Sigmoid colon (tissue), 7 donors: ENCODE measurements at regions of chr1 and their contacts with region 1.

Region 1: GRCh38 chr1:65067491-65068201 is 80.4 kb upstream of the AK4 start:
- DNase-seq: peak; percentile 89
- H3K4me3 ChIP-seq: peak overlapping the region; percentile 91 to 95 (median 94)
- H3K27ac ChIP-seq: peak overlapping the region; percentile 99 to 100 (median 100)
- H3K4me1 ChIP-seq: peaks cover 0 to 39% (median 34%) of the 10 kb centered on the region in 4 donors
- H3K27me3 ChIP-seq: no peaks in the 10 kb centered on the region
- CTCF ChIP-seq: no peak
- EP300 ChIP-seq: no peak
- POLR2A ChIP-seq: peak; percentile 74 to 79

Region 2: DNA sequence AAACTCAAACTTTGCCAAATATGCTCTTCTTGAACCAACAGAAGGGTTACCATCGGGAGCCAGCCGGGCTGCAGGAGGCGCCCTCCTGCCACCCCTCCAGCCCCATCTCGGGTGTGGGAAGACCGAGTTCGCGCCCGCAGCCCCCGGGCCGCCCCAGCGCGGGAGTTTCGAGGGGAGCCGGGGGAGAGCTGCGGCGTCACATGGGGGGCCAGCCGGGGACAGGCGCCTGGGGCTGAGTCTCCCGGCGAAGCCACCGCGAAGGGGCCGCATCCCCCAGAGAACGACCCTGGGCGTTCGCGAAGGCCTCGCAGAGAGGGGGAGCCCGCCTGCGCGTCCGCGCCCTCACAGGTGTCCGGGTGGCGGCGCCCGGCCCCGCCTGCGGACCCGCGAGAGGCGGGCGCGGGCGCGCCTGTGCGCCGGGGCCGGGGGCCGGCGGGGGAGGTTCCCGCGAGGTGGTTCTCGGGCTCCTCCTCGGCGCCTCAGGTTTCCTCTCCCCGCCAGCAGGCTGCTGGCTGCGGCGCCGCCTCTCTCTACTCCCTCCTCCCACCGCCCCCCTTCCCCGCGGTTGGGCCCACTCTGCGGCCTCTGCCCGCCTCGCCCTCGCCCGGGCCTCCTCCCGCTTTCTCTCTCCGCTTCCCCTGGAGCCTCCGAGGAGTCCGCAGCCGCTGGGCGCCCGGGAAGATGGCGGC is 323.0 kb before region 1 on chr1 and contains the start of gene RAVER2:
- intact Hi-C with region 1: loop called (anchors 5 kb)
- DNase-seq: peak; percentile 87
- H3K4me3 ChIP-seq: peak within 1 kb of the TSS; percentile 74 to 91 (median 82)
- H3K27ac ChIP-seq: peak within 1 kb of the TSS; percentile 83 to 91 (median 90)
- H3K4me1 ChIP-seq: peaks cover 0 to 34% (median 24%) of the 10 kb centered on the region in 4 donors
- H3K27me3 ChIP-seq: no peaks in the 10 kb centered on the region
- CTCF ChIP-seq: peak in 2 of 4 experiments; percentile 20 to 46
- EP300 ChIP-seq: no peak
- POLR2A ChIP-seq: no peak
- total RNA-seq, gene RAVER2: 12.7 to 22.2 (median 17.4) TPM

Region 3: GRCh38 chr1:64898107-64898845 is 169.4 kb before region 1 on chr1:
- intact Hi-C with region 1: loop called (anchors 10 kb)
- DNase-seq: peak; percentile 95
- H3K4me3 ChIP-seq: no peak overlapping the region
- H3K27ac ChIP-seq: peak overlapping the region; percentile 59 to 83 (median 81)
- H3K4me1 ChIP-seq: peaks cover 0 to 36% (median 28%) of the 10 kb centered on the region in 4 donors
- H3K27me3 ChIP-seq: no peaks in the 10 kb centered on the region
- CTCF ChIP-seq: no peak
- EP300 ChIP-seq: peak in 2 of 4 donors; percentile 40 to 66
- POLR2A ChIP-seq: no peak

Region 4: DNA sequence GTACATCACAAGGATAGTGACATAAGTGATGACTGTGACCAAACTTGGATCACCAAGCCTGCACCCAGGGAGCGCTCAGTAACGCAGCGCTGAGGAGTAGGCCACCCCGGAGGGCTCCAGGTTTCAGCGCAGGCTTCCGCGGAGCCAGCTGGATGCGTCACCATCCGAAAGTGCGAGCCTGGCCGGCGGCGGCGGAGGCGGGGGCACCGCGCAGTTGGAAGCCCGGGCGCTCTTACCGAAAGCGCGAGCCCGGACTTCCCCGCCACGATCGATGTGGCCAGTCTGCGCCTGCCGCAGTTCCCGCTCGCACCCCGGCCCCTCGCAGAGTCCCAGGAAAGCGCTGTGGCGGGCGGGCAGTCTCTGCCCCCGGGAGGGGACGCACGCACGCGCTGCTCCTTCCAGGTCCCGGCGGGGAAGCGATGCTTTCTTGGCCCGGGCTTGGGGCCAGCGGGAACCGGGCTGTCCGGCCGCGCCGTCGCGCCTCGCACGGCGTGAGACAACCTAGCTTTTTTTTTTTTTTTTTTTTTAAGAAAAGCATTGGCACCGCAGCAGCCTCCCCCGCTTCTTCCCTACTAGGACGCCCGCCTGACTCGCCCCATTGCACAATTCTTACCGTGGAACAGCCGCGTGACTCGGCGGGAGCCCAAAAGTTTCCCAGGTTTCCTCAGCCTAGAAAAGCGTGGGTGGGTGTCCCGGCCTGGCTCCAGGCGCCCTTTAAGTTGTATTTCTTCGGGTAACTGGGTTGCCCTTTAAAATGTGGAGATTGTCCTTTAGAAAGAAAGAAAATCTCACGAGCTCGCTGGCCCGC is 64.9 kb before region 1 on chr1:
- intact Hi-C with region 1: loop called (anchors 2 kb)
- DNase-seq: peak; percentile 98
- H3K4me3 ChIP-seq: peak overlapping the region; percentile 50 to 69 (median 61)
- H3K27ac ChIP-seq: peak overlapping the region; percentile 93 to 97 (median 94)
- H3K4me1 ChIP-seq: peaks cover 0 to 13% (median 9%) of the 10 kb centered on the region in 4 donors
- H3K27me3 ChIP-seq: no peaks in the 10 kb centered on the region
- CTCF ChIP-seq: no peak
- EP300 ChIP-seq: peak; percentile 27 to 77 (median 72)
- POLR2A ChIP-seq: no peak

Region 5: GRCh38 chr1:65195495-65196417 is 128.1 kb after region 1 on chr1:
- intact Hi-C with region 1: no loop called
- DNase-seq: no peak
- H3K4me3 ChIP-seq: no peak overlapping the region
- H3K27ac ChIP-seq: peak overlapping the region in 2 of 4 donors; percentile 6 to 13
- H3K4me1 ChIP-seq: no peaks in the 10 kb centered on the region
- H3K27me3 ChIP-seq: no peaks in the 10 kb centered on the region
- CTCF ChIP-seq: no peak
- EP300 ChIP-seq: no peak
- POLR2A ChIP-seq: no peak

Region 6: DNA sequence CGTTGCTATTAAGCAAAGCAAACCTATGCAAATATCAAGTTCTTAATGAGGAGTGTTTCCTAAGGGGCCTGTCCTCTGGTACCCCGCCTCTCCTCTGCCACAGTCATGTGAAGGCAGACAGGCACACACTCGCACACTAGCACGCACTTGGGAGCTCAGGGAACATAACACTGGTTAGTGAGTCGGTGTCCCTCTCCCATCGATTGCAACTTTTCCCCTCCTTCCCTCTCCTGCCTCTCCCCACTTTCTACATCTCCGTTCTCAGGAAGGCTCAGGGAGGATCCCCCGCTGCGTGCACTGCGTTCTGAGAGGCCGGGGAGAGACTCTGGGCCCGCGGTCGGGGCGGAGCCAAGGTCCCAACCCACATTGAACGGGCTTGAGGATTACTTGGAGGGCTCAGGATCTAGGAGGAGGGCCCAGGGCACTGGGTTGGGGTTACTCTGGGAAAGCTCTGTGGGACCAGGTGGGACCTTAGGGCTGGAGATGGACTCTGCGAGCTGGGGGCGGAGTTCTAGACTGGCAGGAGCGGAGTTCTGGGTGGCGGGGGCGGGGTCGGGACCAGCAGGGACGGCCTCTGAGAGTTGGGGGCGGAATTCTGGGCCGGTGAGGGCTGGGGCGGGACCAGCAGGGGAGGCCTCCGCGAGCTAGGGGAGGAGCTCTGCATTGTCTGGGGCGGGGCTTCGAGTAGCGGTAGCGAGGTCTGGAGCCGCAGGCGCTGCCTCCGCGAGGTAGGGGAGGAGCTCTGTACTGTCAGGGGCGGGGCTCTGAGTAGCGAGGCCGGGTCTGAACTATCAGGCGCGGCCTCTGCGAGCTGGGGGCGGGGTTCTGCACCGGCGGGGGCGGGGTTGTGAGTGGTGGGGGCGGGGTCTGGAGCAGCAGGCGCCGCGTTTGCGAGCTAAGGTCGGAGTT is 352.3 kb after region 1 on chr1:
- intact Hi-C with region 1: loop called (anchors 5 kb)
- DNase-seq: peak; percentile 99
- H3K4me3 ChIP-seq: peak overlapping the region; percentile 88 to 95 (median 92)
- H3K27ac ChIP-seq: peak overlapping the region; percentile 96 to 99 (median 98)
- H3K4me1 ChIP-seq: peaks cover 0 to 34% (median 27%) of the 10 kb centered on the region in 4 donors
- H3K27me3 ChIP-seq: no peaks in the 10 kb centered on the region
- CTCF ChIP-seq: no peak
- EP300 ChIP-seq: no peak
- POLR2A ChIP-seq: no peak

Region 7: GRCh38 chr1:66924756-66925557 is 1857.3 kb after region 1 on chr1 and contains the starts of genes DNAI4 and MIER1:
- intact Hi-C with region 1: loop called (anchors 5 kb)
- DNase-seq: peak; percentile 99
- H3K4me3 ChIP-seq: peak within 1 kb of the TSS; percentile 59 to 91 (median 74)
- H3K27ac ChIP-seq: peak within 1 kb of the TSS; percentile 89 to 95 (median 92)
- H3K4me1 ChIP-seq: peaks cover 0 to 38% (median 32%) of the 10 kb centered on the region in 4 donors
- H3K27me3 ChIP-seq: no peaks in the 10 kb centered on the region
- CTCF ChIP-seq: peak; percentile 27 to 58 (median 40)
- EP300 ChIP-seq: peak in 2 of 4 donors; percentile 34 to 43
- POLR2A ChIP-seq: peak; percentile 23 to 65
- total RNA-seq, gene DNAI4: 5.6 to 16.1 (median 9.5) TPM
- total RNA-seq, gene MIER1: 49.0 to 65.6 (median 58.4) TPM